PC-9 (cell line): ENCODE measurements at regions of chr2 and their contacts with region 1.

Region 1: DNA sequence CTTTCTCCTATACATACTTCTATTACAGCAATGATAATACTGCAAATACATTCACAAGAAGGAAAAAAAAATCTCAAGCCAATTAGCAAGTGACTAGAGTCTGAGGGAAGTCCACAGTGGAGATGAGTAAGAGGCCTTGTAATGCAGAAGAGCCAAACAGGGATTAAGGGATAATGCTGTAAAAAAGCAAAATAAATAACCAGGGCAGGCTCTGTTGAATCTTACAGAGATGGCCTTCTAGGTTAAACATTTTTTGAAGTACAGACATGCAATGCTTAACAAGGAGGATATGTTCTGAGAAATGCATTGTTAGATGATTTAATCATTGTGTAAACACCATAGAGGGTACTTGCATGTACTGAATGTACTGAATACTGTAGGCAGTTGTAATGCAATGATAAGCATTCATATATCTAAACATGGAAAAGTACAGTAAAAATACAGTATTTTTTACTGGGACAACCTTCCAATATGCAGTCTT is 122.1 kb upstream of the RMDN2 start:
- DNase-seq: peak in 1 of 2 experiments; percentile 94
- H3K4me3 ChIP-seq: peak overlapping the region; percentile 28; the same call in 1 of the 2 replicates
- H3K27ac ChIP-seq: peak overlapping the region; percentile 88
- H3K4me1 ChIP-seq: peaks cover 45% of the 10 kb centered on the region
- H3K27me3 ChIP-seq: no peaks in the 10 kb centered on the region
- CTCF ChIP-seq: no peak

Region 2: DNA sequence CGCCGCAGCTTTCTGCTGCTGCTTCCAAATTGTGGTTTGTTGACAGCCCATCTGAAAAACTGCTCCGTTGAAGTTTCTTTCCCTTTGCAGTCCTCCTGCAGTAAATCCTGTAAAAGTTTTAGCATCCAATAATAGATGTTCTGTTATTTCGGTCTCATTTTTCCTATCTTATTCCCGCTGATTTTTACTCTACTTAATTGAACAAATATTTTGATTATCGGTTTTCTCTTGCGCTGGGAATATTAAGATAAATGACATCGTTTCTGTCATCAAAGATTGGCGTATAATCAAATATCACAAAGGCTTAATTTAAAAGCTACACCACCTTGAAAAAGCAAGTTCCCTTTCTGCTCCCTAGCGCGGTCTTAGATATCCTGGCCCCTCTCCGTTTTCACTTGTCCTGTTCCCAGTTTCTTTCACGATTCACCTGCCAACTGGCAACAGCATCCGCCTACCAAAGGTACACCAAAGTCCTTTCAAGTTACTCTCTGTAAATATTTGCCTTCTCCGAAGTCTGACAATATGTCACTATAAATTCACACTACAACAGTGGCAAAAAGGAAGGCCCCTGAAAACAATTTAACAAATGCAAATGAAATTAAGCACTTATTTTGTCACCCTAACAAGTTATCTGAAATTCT is 835.6 kb before region 1 on chr2:
- CTCF ChIA-PET with region 1: no interaction called
- POLR2A ChIA-PET with region 1: no interaction called
- intact Hi-C with region 1: no loop called
- DNase-seq: no peak
- H3K4me3 ChIP-seq: peak overlapping the region; percentile 83
- H3K27ac ChIP-seq: peak overlapping the region; percentile 49; the same call in 1 of the 2 replicates
- H3K4me1 ChIP-seq: peaks cover 38% of the 10 kb centered on the region
- H3K27me3 ChIP-seq: no peaks in the 10 kb centered on the region
- CTCF ChIP-seq: no peak

Region 3: GRCh38 chr2:37711308-37711731 is 91.6 kb before region 1 on chr2:
- CTCF ChIA-PET with region 1: no interaction called
- POLR2A ChIA-PET with region 1: no interaction called
- intact Hi-C with region 1: loop called (anchors 5 kb)
- DNase-seq: peak; percentile 80 to 95
- H3K4me3 ChIP-seq: no peak overlapping the region
- H3K27ac ChIP-seq: peak overlapping the region; percentile 66
- H3K4me1 ChIP-seq: peaks cover 42% of the 10 kb centered on the region
- H3K27me3 ChIP-seq: no peaks in the 10 kb centered on the region
- CTCF ChIP-seq: no peak

Region 4: DNA sequence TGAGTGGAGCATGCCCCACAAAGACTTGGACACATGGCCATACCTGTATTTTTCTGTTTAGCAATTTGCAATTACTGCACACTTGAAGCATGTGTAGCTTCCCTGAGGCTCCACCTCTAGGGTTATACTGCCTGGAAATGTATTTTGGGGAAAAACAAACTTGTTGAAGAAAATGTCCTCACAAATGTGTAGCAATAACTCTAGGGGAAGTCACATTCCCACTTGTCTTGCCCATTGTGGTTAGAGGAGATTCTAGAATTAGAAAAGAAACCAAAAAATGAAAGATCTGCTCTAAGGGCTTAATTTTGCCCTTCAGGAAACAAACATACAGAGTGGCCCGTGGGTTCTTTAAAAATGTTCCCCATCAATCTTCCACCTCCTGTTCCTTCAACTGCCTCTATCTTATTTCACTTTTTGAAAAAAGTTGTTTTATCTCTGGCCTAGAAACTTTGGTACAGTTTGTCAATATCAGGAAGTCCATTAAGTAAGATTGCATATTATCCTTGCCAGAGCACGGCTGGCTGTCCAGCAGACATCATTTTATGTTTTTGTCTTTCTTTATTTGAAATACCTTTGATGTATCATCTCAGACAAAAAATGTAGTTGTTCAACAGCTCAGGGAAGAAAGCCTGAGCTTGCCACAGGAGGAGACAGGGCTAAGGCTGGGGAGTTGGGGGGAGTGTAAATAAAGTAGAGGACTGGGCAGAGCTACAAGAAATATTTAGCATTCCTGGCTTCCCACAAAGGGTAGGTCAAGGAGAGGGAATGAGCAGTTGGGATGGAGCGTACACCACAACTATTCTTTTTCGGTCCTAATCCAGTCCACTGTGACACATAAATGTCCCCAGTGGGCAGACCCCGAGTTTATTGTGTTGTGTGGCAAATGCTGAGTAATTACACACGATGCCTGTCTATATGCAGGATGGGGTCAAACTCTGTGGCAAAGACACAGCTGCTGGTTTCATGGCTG is 34.7 kb before region 1 on chr2:
- CTCF ChIA-PET with region 1: interaction called, 4 read pairs
- POLR2A ChIA-PET with region 1: no interaction called
- intact Hi-C with region 1: loop called (anchors 2 kb)
- DNase-seq: peak; percentile 75 to 95
- H3K4me3 ChIP-seq: peak overlapping the region; percentile 9; the same call in 1 of the 2 replicates
- H3K27ac ChIP-seq: peak overlapping the region; percentile 66
- H3K4me1 ChIP-seq: peaks cover 42% of the 10 kb centered on the region
- H3K27me3 ChIP-seq: no peaks in the 10 kb centered on the region
- CTCF ChIP-seq: no peak

Region 5: DNA sequence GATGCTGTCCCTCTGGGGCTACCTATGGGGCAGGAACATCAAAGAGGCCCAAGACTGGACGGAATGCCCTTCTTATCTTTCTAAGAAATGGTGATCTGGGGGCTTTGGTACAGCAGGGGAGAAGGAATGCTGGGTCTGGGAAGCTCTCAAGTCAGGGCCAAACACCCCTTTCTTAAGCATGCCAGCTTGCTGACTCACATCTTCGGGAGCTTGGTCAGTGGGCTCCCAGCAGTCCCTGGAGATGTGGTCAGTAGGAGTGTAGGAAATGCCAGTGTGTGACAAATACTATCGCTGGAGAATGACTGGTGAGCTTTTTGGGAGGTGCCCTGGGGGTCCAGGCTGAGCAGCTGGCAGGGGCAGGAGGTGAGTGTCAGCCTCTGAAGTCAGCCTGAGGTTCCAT is 26.5 kb before region 1 on chr2:
- CTCF ChIA-PET with region 1: interaction called, 4 read pairs
- POLR2A ChIA-PET with region 1: no interaction called
- intact Hi-C with region 1: loop called (anchors 2 kb)
- DNase-seq: peak; percentile 76 to 93
- H3K4me3 ChIP-seq: no peak overlapping the region
- H3K27ac ChIP-seq: peak overlapping the region; percentile 62
- H3K4me1 ChIP-seq: peaks cover 56% of the 10 kb centered on the region
- H3K27me3 ChIP-seq: no peaks in the 10 kb centered on the region
- CTCF ChIP-seq: no peak